ENCODE measurements at regions of chr5 and their contacts with region 1.

Region 1: GRCh38 chr5:16791036-16791705 is 144.9 kb downstream of the MYO10 start:
- DNase-seq: peak; percentile 36
- ATAC-seq: peak; percentile 44; the same call in 1 of the 3 replicates
- H3K4me3 ChIP-seq: no peak overlapping the region
- H3K27ac ChIP-seq: no peak overlapping the region
- H3K4me1 ChIP-seq: peaks cover 11% of the 10 kb centered on the region
- H3K27me3 ChIP-seq: no peaks in the 10 kb centered on the region
- CTCF ChIP-seq: peak; percentile 61
- EP300 ChIP-seq: no peak
- POLR2A ChIP-seq: no peak
- RAD21 ChIP-seq: peak; percentile 56; the same call in 1 of the 2 replicates

Region 2: GRCh38 chr5:17189381-17190036 is 398.3 kb after region 1 on chr5:
- CTCF ChIA-PET with region 1: interaction called, 37 read pairs
- POLR2A ChIA-PET with region 1: no interaction called
- in situ Hi-C with region 1: loop called (anchors 5 kb)
- intact Hi-C with region 1: loop called (anchors 1 kb)
- DNase-seq: peak; percentile 65
- ATAC-seq: peak; percentile 90
- H3K4me3 ChIP-seq: no peak overlapping the region
- H3K27ac ChIP-seq: no peak overlapping the region
- H3K4me1 ChIP-seq: no peaks in the 10 kb centered on the region
- H3K27me3 ChIP-seq: peaks cover 0 to 4% of the 10 kb centered on the region in 2 experiments; a peak in 1 of 5 replicates
- CTCF ChIP-seq: peak; percentile 81
- EP300 ChIP-seq: no peak
- POLR2A ChIP-seq: no peak
- RAD21 ChIP-seq: no peak

Measured in HepG2 (cell line).